Activated T-helper 2 cell treated with anti-CD3 and anti-CD28 coated beads, Interferon-gamma antibody, Interleukin-2, Interleukin-4, amounts not matched to agents 10 μg/mL and 5 μg/mL and 100 μg/mL, durations not matched to agents 14 hours and 24 hours and 36 hours (primary cell): ENCODE measurements at regions of chr12 and their contacts with region 1.

Region 1: DNA sequence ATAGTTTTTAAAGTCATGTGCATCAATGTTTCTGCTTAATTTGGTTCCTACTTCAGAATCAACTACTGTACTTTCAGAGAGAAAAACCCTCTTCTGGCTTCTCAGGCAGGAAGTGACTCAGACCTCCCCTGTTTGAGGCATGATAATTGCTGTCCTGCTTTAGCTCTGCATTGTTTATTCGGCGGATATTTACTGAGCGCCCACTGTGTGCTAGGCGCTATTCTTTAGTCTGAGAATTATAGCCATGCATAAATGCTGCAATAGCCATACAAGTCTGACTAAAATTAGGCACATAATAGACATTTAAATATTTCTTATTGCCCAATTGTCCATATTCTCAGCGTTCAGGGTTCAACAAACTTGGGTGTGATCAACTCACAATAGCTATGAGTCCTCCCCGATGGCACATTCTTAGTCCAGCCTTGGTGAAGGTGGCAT is 6.1 kb upstream of the AMIGO2 start:
- DNase-seq: no peak
- H3K4me3 Mint-ChIP-seq: no peak overlapping the region
- H3K27ac Mint-ChIP-seq: peak overlapping the region; percentile 48
- H3K4me1 Mint-ChIP-seq: peaks cover 55% of the 10 kb centered on the region
- H3K27me3 Mint-ChIP-seq: no peaks in the 10 kb centered on the region

Region 2: DNA sequence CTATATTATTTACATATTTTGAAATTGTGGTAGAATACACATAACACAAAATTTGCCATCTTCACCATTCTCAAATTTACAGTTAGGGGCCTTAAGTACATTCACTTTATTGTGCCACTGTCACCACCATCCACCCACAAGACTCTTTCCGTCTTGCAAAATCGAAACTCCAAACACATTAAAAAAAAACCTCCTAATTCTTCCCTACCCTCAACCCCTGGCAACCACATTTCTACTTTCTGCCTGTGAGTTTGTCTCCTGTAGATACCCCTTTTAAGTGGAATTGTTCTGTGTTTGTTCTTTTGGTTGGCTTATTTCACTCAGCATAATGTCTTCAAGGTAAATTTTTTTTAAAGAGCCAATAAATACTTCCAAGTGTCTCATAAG is 25.6 kb after region 1 on chr12:
- intact Hi-C with region 1: loop called (anchors 1 kb)
- DNase-seq: no peak
- H3K4me3 Mint-ChIP-seq: no peak overlapping the region
- H3K27ac Mint-ChIP-seq: peak overlapping the region; percentile 28
- H3K4me1 Mint-ChIP-seq: peaks cover 22% of the 10 kb centered on the region
- H3K27me3 Mint-ChIP-seq: no peaks in the 10 kb centered on the region

Region 3: DNA sequence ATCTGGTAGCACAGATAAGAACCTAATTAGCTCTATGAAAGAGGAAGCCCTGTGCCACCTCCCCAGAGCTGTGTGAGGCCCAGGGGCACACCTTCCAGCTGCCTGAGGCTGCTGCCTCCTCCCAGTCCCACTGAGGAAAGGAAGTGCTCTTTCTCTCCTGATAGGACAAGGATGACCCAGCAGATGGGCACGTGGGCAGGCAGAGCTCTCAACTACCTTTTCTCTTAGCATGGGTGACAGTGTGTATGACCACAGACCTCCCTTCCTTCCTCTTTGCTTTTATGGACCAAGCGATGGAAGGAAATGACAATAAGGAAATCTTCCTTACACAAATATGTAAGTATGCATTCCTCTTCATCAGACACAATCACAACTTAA is 121.5 kb after region 1 on chr12:
- intact Hi-C with region 1: loop called (anchors 2 kb)
- DNase-seq: peak; percentile 39
- H3K4me3 Mint-ChIP-seq: peak overlapping the region; percentile 60
- H3K27ac Mint-ChIP-seq: peak overlapping the region; percentile 86
- H3K4me1 Mint-ChIP-seq: peaks cover 58% of the 10 kb centered on the region
- H3K27me3 Mint-ChIP-seq: no peaks in the 10 kb centered on the region

Region 4: GRCh38 chr12:47920913-47921312 is 835.1 kb after region 1 on chr12:
- intact Hi-C with region 1: no loop called
- DNase-seq: no peak
- H3K4me3 Mint-ChIP-seq: no peak overlapping the region
- H3K27ac Mint-ChIP-seq: no peak overlapping the region
- H3K4me1 Mint-ChIP-seq: peaks cover 7% of the 10 kb centered on the region
- H3K27me3 Mint-ChIP-seq: peaks cover 35% of the 10 kb centered on the region